ENCODE measurements at regions of chr3 and their contacts with region 1.

Region 1: DNA sequence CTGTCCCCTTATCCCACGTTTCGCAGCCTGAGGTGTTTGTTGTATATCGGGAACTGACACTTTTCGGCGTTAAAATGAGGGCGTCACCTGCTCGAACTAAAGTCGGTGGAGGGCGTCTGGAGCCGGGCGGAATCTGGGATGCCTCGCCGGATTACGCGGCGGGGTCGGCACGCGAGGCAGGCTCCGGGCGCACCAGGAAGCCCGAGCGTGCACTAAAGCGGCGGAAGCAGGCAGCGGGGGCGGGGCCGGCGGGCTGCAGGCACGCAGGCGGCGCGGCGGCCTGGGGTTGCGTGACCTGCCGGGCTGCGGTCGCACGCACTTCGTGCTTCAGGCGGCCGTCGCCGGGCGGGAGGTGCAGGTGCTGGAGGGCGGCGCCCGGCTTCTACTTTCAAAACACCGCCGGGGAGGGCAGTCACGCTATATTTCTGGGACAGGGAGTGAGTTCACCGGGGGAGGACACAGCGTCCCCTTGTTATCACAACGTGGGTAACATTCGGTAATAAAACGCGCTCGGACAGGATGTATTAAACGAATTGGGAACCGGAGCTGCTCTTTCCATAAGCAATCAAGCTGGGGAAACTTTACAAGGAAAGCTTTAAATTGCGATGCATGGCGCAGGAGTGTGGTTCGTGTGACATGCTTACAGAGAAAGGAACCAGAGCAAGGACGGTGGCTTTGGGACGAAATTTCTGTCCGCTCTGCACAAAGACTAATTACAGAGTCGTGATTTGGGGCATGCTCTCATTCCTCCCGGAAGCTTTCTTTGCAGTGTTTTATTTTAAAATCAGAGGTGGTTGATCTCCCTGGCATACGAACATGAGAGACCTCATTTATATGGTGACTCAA is 9.1 kb upstream of the LEKR1 start:
- DNase-seq: peak; percentile 86 to 90
- ATAC-seq: peak; percentile 89 to 92 (median 90)
- H3K4me3 ChIP-seq: peak overlapping the region; percentile 73
- H3K27ac ChIP-seq: peak overlapping the region; percentile 85
- H3K4me1 ChIP-seq: peaks cover 17% of the 10 kb centered on the region
- H3K27me3 ChIP-seq: no peaks in the 10 kb centered on the region
- CTCF ChIP-seq: no peak

Region 2: DNA sequence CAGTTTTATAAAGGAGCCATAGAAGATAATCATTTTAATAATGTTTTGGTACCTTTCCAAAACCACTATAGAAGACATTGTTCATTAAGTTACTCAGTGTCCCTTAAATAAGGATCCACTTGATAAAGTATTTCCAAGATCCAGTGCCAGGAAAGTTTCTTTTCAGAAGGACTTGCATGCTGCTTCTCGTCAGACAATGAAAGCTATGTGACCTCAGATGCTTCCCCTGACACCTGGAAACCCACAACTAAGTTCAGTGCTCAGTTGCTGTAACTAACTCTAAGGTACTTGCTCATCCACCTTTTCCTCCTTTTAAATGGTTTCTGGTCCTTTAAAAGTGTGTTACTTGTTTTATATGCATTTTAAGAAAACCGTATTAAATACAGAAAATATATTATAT is 269.4 kb before region 1 on chr3:
- intact Hi-C with region 1: loop called in 1 of 2 experiments (anchors 10 kb)
- DNase-seq: no peak
- ATAC-seq: no peak
- H3K4me3 ChIP-seq: no peak overlapping the region
- H3K27ac ChIP-seq: no peak overlapping the region
- H3K4me1 ChIP-seq: peaks cover 50% of the 10 kb centered on the region
- H3K27me3 ChIP-seq: no peaks in the 10 kb centered on the region
- CTCF ChIP-seq: no peak

Region 3: DNA sequence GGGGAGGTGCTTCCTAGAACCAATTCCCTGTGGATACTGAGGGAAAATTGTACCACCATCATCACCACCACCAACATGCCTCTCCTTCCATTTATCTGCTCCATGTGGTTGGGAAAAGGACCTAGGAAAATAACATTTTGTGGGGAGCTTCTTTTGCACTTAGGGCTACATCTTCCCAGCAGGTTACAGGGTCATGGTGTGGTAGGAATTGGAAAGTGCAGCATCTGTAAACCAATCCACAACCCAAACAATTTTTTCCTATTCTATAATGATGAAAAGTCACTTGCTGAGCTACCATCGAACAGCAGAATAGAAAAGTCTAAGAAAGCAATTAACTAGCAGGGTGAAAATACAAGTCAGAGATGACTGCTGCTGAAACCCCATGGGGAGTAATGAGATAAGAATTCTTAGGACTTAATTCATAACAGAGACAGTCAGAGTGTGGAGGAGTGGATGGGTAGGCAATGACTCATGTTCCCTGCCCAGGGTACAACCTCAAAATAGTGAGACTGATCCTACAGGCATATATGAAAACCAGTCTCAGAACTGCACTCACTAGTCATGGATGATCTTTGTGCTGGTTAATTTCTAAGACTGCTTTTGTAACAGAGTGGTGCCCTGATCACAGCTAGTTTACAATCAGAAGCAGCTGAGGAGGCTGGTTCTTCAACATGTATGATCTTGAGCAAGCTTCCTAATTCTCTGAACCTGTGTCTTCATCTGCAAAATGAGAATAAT is 28.9 kb before region 1 on chr3:
- intact Hi-C with region 1: no loop called
- DNase-seq: no peak
- ATAC-seq: peak; percentile 66 to 92 (median 80)
- H3K4me3 ChIP-seq: no peak overlapping the region
- H3K27ac ChIP-seq: no peak overlapping the region
- H3K4me1 ChIP-seq: no peaks in the 10 kb centered on the region
- H3K27me3 ChIP-seq: no peaks in the 10 kb centered on the region
- CTCF ChIP-seq: no peak

Region 4: DNA sequence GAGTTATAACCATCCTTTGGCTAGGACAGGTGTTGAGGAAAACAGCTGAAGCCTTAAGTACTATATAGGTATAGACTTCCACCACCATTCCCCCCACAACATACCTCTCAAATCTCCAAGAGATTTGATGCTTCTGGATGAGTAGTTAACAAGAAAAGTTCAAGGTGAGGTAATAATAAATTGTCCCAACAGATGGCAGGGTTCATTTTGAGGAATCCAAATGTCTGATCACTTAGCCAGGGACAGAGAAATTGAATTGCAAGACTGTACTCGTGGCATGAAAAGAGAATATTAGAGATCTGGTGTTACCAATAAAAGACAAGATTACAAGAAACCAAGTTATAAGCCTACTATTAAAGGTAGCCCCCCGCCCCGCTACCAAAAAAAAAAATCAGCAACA is 74.6 kb after region 1 on chr3:
- intact Hi-C with region 1: no loop called
- DNase-seq: no peak
- ATAC-seq: no peak
- H3K4me3 ChIP-seq: no peak overlapping the region
- H3K27ac ChIP-seq: no peak overlapping the region
- H3K4me1 ChIP-seq: no peaks in the 10 kb centered on the region
- H3K27me3 ChIP-seq: no peaks in the 10 kb centered on the region
- CTCF ChIP-seq: no peak

Region 5: DNA sequence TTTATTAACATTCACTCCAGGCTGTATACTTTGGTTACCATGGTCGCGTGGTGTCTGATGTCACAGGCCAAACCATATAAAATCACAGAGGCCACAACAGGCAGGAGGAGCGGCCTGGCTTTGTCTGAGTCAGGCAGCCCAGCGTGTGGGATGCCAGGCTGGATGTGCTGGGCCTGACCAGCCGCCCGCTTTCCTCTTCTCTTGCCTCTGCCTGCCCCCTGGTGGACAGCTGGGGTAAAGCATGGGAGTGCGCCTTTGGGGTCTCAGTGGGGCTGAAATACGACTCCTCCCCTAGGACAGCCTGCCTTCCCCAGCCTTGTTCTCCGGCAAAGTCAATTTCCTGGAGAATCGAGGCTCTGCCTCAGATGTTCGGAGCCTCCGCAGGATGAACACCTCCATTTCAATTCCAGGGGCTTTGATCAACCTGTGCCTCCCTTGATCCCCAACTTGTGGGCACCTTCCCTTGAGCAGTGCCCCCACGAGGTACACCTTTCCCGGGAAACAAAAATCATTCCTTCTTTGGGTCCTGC is 264.7 kb after region 1 on chr3:
- intact Hi-C with region 1: loop called (anchors 5 to 10 kb)
- DNase-seq: peak; percentile 91 to 95
- ATAC-seq: peak; percentile 83 to 90 (median 88)
- H3K4me3 ChIP-seq: no peak overlapping the region
- H3K27ac ChIP-seq: no peak overlapping the region
- H3K4me1 ChIP-seq: peaks cover 19% of the 10 kb centered on the region
- H3K27me3 ChIP-seq: no peaks in the 10 kb centered on the region
- CTCF ChIP-seq: peak; percentile 98